Natural killer cell (primary cell): ENCODE measurements at regions of chr15 and their contacts with region 1.

Region 1: GRCh38 chr15:45198337-45199135 is 10.8 kb upstream of the SHF start:
- DNase-seq: peak; percentile 97 to 99
- ATAC-seq: peak; percentile 61 to 84 (median 69)
- H3K4me3 ChIP-seq: peak overlapping the region; percentile 72
- H3K4me3 Mint-ChIP-seq: no peak overlapping the region
- H3K27ac ChIP-seq: peak overlapping the region; percentile 90
- H3K27ac Mint-ChIP-seq: no peak overlapping the region
- H3K4me1 ChIP-seq: peaks cover 20% of the 10 kb centered on the region
- H3K4me1 Mint-ChIP-seq: peaks cover 4 to 5% of the 10 kb centered on the region in 2 donors
- H3K27me3 ChIP-seq: no peaks in the 10 kb centered on the region
- H3K27me3 Mint-ChIP-seq: no peaks in the 10 kb centered on the region
- CTCF ChIP-seq: peak; percentile 62

Region 2: GRCh38 chr15:44426975-44427755 is 771.4 kb before region 1 on chr15 and contains the start of gene CTDSPL2:
- intact Hi-C with region 1: loop called (anchors 2 kb)
- DNase-seq: peak; percentile 93 to 96
- ATAC-seq: peak; percentile 94 to 99 (median 95)
- H3K4me3 ChIP-seq: peak within 1 kb of the TSS; percentile 82
- H3K4me3 Mint-ChIP-seq: peak within 1 kb of the TSS; percentile 99
- H3K27ac ChIP-seq: peak within 1 kb of the TSS; percentile 93
- H3K27ac Mint-ChIP-seq: peak within 1 kb of the TSS; percentile 97 to 100
- H3K4me1 ChIP-seq: peaks cover 11% of the 10 kb centered on the region
- H3K4me1 Mint-ChIP-seq: peaks cover 54 to 56% of the 10 kb centered on the region in 2 donors
- H3K27me3 ChIP-seq: no peaks in the 10 kb centered on the region
- H3K27me3 Mint-ChIP-seq: no peaks in the 10 kb centered on the region
- CTCF ChIP-seq: no peak
- total RNA-seq, gene CTDSPL2: 89.5 to 108 (median 96.5) TPM

Region 3: DNA sequence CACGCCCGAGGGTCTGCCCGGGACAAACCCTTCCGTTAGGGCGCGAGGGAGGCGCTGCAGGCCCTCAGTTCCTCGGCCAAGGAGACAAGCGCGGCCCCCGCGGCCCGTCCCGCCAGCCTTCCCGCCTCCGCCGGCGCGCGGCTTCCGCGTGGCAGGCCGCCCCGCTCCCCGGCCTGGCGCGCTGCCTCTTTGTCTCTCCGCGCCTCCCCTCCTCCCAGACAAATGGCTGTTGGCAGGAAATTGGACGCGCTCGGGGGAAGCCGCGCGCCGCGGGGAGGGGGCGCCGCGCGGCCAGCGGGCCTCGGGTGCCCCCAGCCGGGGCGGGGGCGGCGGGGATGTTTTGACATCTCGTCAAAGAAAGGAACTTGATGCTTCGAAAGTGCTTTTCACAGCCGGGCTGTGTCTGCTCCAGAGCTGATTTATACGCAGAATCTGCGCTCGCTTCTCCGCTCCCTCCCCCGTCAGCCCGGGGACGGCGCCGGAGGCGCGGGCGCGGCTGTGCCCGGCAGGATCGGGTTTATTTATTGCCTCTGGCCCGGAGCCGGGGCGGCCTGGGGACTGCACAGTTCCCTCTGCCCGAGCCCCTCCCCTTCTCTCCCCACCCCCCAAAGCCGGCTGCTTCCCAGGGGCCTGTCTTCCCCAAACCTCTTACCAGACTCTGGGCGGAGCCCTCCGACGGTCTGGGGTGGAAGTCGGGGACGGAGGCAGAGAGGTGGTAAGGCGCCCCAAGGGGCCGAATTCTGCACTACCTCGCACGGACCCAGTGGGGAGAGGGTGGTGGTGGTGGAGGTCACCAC is 31.5 kb before region 1 on chr15:
- intact Hi-C with region 1: loop called (anchors 1 kb)
- DNase-seq: peak; percentile 71 to 89
- ATAC-seq: peak; percentile 92 to 95 (median 94)
- H3K4me3 ChIP-seq: peak overlapping the region; percentile 70
- H3K4me3 Mint-ChIP-seq: peak overlapping the region; percentile 77
- H3K27ac ChIP-seq: peak overlapping the region; percentile 81
- H3K27ac Mint-ChIP-seq: peak overlapping the region; percentile 46 to 81
- H3K4me1 ChIP-seq: peaks cover 34% of the 10 kb centered on the region
- H3K4me1 Mint-ChIP-seq: peaks cover 6 to 35% of the 10 kb centered on the region in 2 donors
- H3K27me3 ChIP-seq: no peaks in the 10 kb centered on the region
- H3K27me3 Mint-ChIP-seq: no peaks in the 10 kb centered on the region
- CTCF ChIP-seq: peak; percentile 66

Region 4: GRCh38 chr15:45402162-45402954 is 203.8 kb after region 1 on chr15:
- intact Hi-C with region 1: loop called (anchors 2 kb)
- DNase-seq: peak; percentile 95 to 99
- ATAC-seq: peak; percentile 87 to 96 (median 90)
- H3K4me3 ChIP-seq: peak overlapping the region; percentile 70
- H3K4me3 Mint-ChIP-seq: peak overlapping the region; percentile 91
- H3K27ac ChIP-seq: peak overlapping the region; percentile 91
- H3K27ac Mint-ChIP-seq: peak overlapping the region; percentile 92 to 93
- H3K4me1 ChIP-seq: peaks cover 15% of the 10 kb centered on the region
- H3K4me1 Mint-ChIP-seq: peaks cover 21 to 25% of the 10 kb centered on the region in 2 donors
- H3K27me3 ChIP-seq: no peaks in the 10 kb centered on the region
- H3K27me3 Mint-ChIP-seq: no peaks in the 10 kb centered on the region
- CTCF ChIP-seq: no peak

Region 5: GRCh38 chr15:45587095-45587860 is 388.7 kb after region 1 on chr15 and contains the start of gene BLOC1S6:
- intact Hi-C with region 1: loop called (anchors 10 kb)
- DNase-seq: peak; percentile 93 to 95
- ATAC-seq: peak; percentile 88 to 97 (median 93)
- H3K4me3 ChIP-seq: peak within 1 kb of the TSS; percentile 68
- H3K4me3 Mint-ChIP-seq: peak within 1 kb of the TSS; percentile 97
- H3K27ac ChIP-seq: peak within 1 kb of the TSS; percentile 94
- H3K27ac Mint-ChIP-seq: peak within 1 kb of the TSS; percentile 99 to 100
- H3K4me1 ChIP-seq: peaks cover 15% of the 10 kb centered on the region
- H3K4me1 Mint-ChIP-seq: peaks cover 39% of the 10 kb centered on the region in 2 donors
- H3K27me3 ChIP-seq: no peaks in the 10 kb centered on the region
- H3K27me3 Mint-ChIP-seq: peaks cover 0 to 4% of the 10 kb centered on the region in 2 donors
- CTCF ChIP-seq: no peak
- total RNA-seq, gene BLOC1S6: 63.4 to 81.3 (median 65.6) TPM